PC-3 (cell line): ENCODE measurements at regions of chr14 and their contacts with region 1.

Region 1: DNA sequence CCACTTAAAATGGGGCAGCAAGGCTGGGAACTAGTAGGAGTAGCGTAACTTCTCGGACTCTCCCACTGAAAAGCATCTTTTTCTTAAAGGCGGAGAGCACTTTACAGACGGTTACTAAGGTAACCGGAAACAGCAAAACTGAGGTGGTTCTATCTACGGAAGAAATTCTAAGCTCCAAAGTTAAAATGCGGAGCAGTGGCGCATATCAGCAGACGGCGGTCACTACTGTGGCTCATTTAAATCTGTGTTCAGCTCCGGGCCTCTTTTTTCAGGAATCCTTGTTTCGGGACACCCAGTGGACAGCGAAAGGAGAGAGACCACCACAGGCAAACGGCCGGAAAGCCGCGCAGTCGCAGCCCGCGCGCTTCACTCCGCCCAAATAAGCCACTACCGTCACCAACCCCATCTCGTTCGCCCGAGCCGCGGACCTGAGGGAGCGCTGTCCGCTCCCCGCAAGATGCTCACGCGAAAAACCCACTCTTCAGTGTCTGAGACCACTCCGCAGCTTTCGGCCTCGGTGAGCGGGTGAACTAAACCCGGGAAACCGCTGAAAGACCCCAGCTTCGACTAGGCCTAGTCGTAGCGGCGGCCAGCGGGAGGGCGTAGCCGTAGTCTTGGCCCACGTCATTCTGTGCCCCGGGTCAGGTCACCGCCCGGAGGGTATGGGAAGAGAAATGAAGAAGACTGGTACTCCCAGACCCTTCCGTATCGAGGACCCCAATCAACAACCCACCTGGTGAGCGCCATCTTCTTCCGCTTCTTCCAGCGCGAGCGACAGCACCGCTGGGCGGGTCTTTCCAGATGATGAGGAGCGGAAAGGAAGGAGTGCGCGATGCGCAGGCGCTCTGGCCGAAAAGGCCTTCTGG is at the start of gene SNW1:
- DNase-seq: peak; percentile 97
- ATAC-seq: peak; percentile 93
- H3K4me3 ChIP-seq: peak within 1 kb of the TSS; percentile 99
- H3K27ac ChIP-seq: peak within 1 kb of the TSS; percentile 54
- H3K4me1 ChIP-seq: peaks cover 19% of the 10 kb centered on the region
- H3K27me3 ChIP-seq: no peaks in the 10 kb centered on the region
- CTCF ChIP-seq: no peak; the same call in 1 of the 2 replicates
- total RNA-seq, gene SNW1: 67.5 and 74.5 TPM in 2 replicates

Region 2: DNA sequence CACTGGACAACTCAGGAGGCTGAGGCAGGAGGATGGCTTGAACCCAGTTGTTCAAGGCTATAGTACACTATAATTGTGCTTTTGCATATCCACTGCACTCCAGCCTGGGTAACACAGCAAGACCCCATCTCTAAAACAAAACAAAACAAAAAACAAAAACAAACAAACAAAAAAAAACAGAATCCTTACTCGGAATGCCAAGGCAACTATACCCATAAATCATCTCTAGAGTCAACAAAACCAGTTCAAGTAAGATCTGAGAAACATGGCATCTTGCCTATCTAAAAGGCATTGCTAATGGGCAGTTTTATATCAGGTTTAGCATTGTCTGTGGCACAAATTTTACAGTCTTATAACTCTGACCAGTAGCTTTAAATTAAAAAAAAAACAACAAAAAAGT is 371.7 kb before region 1 on chr14:
- CTCF ChIA-PET with region 1: no interaction called
- POLR2A ChIA-PET with region 1: no interaction called
- intact Hi-C with region 1: no loop called
- DNase-seq: no peak
- ATAC-seq: no peak
- H3K4me3 ChIP-seq: no peak overlapping the region
- H3K27ac ChIP-seq: no peak overlapping the region
- H3K4me1 ChIP-seq: no peaks in the 10 kb centered on the region
- H3K27me3 ChIP-seq: no peaks in the 10 kb centered on the region
- CTCF ChIP-seq: no peak

Region 3: GRCh38 chr14:77436042-77436441 is 324.6 kb before region 1 on chr14:
- CTCF ChIA-PET with region 1: no interaction called
- POLR2A ChIA-PET with region 1: no interaction called
- intact Hi-C with region 1: no loop called
- DNase-seq: peak; percentile 37
- ATAC-seq: peak; percentile 62; the same call in 1 of the 2 replicates
- H3K4me3 ChIP-seq: no peak overlapping the region
- H3K27ac ChIP-seq: no peak overlapping the region
- H3K4me1 ChIP-seq: no peaks in the 10 kb centered on the region
- H3K27me3 ChIP-seq: no peaks in the 10 kb centered on the region
- CTCF ChIP-seq: no peak

Region 4: GRCh38 chr14:77782202-77782601 is 21.6 kb after region 1 on chr14:
- CTCF ChIA-PET with region 1: no interaction called
- POLR2A ChIA-PET with region 1: interaction called, 24 read pairs
- intact Hi-C with region 1: no loop called
- DNase-seq: no peak
- ATAC-seq: no peak
- H3K4me3 ChIP-seq: no peak overlapping the region
- H3K27ac ChIP-seq: no peak overlapping the region
- H3K4me1 ChIP-seq: no peaks in the 10 kb centered on the region
- H3K27me3 ChIP-seq: no peaks in the 10 kb centered on the region
- CTCF ChIP-seq: no peak

Region 5: GRCh38 chr14:77799863-77800730 is 39.5 kb after region 1 on chr14 and contains the start of gene ADCK1:
- CTCF ChIA-PET with region 1: interaction called, 5 read pairs
- POLR2A ChIA-PET with region 1: interaction called, 8 read pairs
- intact Hi-C with region 1: loop called (anchors 1 kb)
- DNase-seq: peak; percentile 79
- ATAC-seq: peak; percentile 85
- H3K4me3 ChIP-seq: peak within 1 kb of the TSS; percentile 89
- H3K27ac ChIP-seq: peak within 1 kb of the TSS; percentile 67
- H3K4me1 ChIP-seq: peaks cover 7% of the 10 kb centered on the region; the same call in 1 of the 2 replicates
- H3K27me3 ChIP-seq: no peaks in the 10 kb centered on the region
- CTCF ChIP-seq: peak; percentile 41; the same call in 1 of the 2 replicates
- total RNA-seq, gene ADCK1: 4.7 and 5.7 TPM in 2 replicates

Region 6: DNA sequence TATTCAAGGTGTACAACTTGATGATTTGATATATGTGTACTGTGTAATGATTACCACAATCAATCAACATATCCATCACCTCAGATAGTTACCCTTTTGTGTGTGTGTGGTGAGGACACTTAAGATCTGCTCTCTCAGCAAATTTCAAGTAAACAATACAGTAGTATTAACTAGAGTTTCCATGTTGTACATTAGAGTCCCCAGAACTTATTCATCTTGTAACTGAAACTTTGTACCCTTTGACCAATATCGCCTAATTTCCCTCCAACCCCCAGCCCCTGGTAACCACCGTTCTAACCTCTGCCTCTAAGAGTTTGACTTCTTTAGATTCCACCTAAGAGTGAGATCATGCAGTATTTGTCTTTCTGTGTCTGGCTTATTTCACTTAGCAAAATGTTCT is 51.4 kb after region 1 on chr14:
- CTCF ChIA-PET with region 1: no interaction called
- POLR2A ChIA-PET with region 1: no interaction called
- intact Hi-C with region 1: loop called (anchors 1 kb)
- DNase-seq: no peak
- ATAC-seq: no peak
- H3K4me3 ChIP-seq: no peak overlapping the region
- H3K27ac ChIP-seq: no peak overlapping the region
- H3K4me1 ChIP-seq: no peaks in the 10 kb centered on the region
- H3K27me3 ChIP-seq: no peaks in the 10 kb centered on the region
- CTCF ChIP-seq: no peak

Region 7: GRCh38 chr14:77849711-77850110 is 89.1 kb after region 1 on chr14:
- CTCF ChIA-PET with region 1: no interaction called
- POLR2A ChIA-PET with region 1: interaction called, 14 read pairs
- intact Hi-C with region 1: no loop called
- DNase-seq: peak; percentile 39
- ATAC-seq: peak; percentile 50
- H3K4me3 ChIP-seq: no peak overlapping the region
- H3K27ac ChIP-seq: no peak overlapping the region
- H3K4me1 ChIP-seq: no peaks in the 10 kb centered on the region
- H3K27me3 ChIP-seq: no peaks in the 10 kb centered on the region
- CTCF ChIP-seq: no peak